BJ (cell line): ENCODE measurements at regions of chr12 and their contacts with region 1.

Region 1: DNA sequence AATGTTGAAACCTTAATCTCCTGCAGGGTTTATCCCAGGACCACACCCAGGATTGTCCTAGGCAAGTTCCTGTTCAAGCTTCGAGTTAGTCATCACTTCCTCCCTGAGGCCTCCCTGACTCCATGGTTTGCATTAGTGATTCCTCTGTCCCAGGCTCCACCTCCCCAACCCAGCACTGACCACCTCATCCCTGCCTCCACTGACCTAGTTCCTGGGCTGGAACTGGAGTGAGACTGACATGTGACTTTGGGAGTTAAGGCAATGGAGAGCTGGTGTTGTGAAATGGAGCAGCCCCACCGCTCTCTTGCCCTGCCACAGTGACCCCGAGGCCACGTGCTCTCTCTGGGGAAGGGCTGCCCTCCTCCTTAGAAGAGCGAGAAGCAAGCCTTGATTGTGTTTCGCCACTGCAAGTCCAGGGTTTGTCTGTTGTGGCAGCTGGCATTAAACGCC is 15.8 kb upstream of the DTX1 start:
- DNase-seq: peak; percentile 9
- H3K4me3 ChIP-seq: no peak overlapping the region
- H3K27me3 ChIP-seq: peaks cover 1% of the 10 kb centered on the region; the same call in 1 of the 2 replicates
- CTCF ChIP-seq: no peak

Region 2: GRCh38 chr12:113152835-113153814 is 112.4 kb after region 1 on chr12:
- CTCF ChIA-PET with region 1: interaction called, 11 read pairs
- POLR2A ChIA-PET with region 1: interaction called, 6 read pairs
- DNase-seq: peak; percentile 10
- H3K4me3 ChIP-seq: peak overlapping the region; percentile 32
- H3K27me3 ChIP-seq: peaks cover 23% of the 10 kb centered on the region
- CTCF ChIP-seq: peak; percentile 59

Region 3: DNA sequence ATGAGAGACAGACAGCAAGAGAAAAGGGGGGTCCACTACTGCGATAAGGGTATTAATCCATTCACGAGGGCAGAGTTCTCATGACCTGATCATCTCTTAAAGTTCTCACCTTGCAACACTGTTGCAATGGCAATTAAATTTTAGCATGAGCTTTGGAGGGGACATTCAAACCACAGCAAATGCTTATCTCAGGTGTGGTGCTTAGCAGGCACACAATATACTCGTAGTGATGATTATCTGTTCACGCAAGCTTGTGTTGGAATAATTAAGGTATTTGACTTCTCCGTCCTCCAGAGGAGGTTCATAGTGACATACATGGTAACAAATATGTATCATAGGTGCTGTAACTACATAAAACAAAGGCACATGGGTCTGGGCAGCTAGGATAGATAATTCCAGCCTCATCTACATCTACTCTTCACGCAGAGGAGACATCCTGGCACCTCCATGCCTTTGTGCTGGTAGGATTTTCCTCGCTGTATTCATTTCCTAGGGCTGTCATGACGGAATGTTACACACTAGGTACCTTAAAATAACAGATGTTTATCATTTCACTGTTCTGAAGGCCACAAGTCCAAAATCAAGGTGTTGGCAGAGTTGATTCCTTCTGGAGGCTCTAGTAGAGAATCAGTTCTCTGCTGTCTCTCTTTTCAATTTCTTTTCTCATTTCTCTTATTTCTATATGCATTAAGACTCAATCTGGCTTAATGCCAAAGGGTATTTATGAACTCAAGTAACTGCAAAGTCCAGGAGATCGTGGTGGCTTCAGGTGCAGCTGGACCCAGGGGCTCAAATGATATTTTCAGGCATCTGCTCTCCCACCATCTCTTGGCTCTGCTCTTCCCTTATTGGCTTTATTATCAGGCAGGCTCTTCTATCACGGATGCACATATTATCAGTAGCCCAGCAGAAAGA is 704.3 kb after region 1 on chr12:
- CTCF ChIA-PET with region 1: no interaction called
- POLR2A ChIA-PET with region 1: interaction called, 15 read pairs
- DNase-seq: no peak
- H3K4me3 ChIP-seq: no peak overlapping the region
- H3K27me3 ChIP-seq: peaks cover 10% of the 10 kb centered on the region
- CTCF ChIP-seq: no peak